ENCODE measurements at regions of chr14 and their contacts with region 1.

Region 1: DNA sequence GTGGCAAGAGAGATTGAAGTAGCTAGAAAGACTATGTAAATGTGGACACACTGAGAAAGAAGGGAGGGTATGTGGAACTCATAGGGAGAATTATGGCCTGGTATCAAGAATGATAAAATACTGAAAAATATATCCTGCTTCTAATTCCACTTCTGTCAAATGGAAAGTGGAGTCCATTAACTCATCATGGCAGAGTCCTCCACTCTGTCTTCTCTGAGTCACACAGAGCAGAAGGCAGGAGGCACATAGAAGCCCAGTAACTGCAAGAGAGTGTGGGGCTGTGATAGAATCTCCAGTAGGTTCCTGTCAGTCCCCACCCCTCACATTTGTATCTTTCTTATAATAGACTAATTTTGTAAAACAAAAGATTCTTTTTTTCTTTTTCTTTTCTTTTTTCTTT is 223.7 kb downstream of the AKAP6 start:
- DNase-seq: no peak
- H3K4me3 ChIP-seq: no peak overlapping the region
- H3K27me3 ChIP-seq: no peaks in the 10 kb centered on the region
- CTCF ChIP-seq: no peak

Region 2: GRCh38 chr14:32571995-32572866 is 19.5 kb after region 1 on chr14:
- CTCF ChIA-PET with region 1: no interaction called
- POLR2A ChIA-PET with region 1: no interaction called
- DNase-seq: no peak
- H3K4me3 ChIP-seq: no peak overlapping the region
- H3K27me3 ChIP-seq: no peaks in the 10 kb centered on the region
- CTCF ChIP-seq: no peak

Region 3: GRCh38 chr14:32611752-32612151 is 59.0 kb after region 1 on chr14:
- CTCF ChIA-PET with region 1: no interaction called
- POLR2A ChIA-PET with region 1: interaction called, 10 read pairs
- DNase-seq: peak; percentile 71
- H3K4me3 ChIP-seq: no peak overlapping the region
- H3K27me3 ChIP-seq: no peaks in the 10 kb centered on the region
- CTCF ChIP-seq: no peak

Measured in BJ (cell line).